Heart right ventricle (tissue), 16 donors: ENCODE measurements at regions of chr4 and their contacts with region 1.

Region 1: GRCh38 chr4:88613417-88613875 is 21.2 kb downstream of the HERC3 start:
- DNase-seq: no peak
- ATAC-seq: peak in 6 of 8 donors; percentile 23 to 61 (median 38)
- H3K4me3 ChIP-seq: peak overlapping the region in 2 of 10 donors; percentile 0 to 6
- H3K27ac ChIP-seq: peak overlapping the region; percentile 57 to 85 (median 72)
- H3K4me1 ChIP-seq: peaks cover 17 to 94% (median 68%) of the 10 kb centered on the region in 9 donors
- H3K27me3 ChIP-seq: no peaks in the 10 kb centered on the region
- CTCF ChIP-seq: no peak

Region 2: DNA sequence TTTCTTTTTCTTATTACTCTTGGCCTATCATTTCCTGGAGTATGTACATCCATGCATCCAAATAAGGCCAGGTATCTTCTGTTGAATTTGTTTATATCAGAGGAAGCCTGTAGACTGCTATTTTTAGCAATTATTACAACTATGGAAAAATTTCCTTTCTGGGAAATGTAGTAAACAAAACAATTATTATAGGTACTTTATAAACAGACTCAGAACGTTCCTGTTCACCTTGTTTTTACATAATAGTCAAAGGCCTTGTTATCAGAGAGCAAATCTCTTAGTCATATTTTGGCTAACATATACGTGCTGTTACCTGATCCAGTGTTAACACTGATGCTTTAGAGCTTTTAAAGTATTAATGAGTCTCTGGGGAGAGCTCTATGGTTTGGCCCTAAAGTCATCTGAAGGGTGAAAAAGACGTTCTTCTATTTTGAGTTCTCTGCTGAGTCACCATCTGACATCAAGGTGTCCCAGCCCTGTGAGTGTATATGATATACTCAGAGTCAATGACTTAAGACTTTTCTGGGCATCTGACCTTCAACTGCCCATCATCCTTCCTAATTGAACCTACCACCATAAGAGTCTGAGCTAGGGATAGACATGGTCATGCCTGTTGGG is 1091.6 kb before region 1 on chr4:
- intact Hi-C with region 1: loop called in 1 of 10 experiments (anchors 5 kb)
- DNase-seq: no peak
- ATAC-seq: peak in 7 of 8 donors; percentile 16 to 69 (median 41)
- H3K4me3 ChIP-seq: peak overlapping the region in 3 of 10 donors; percentile 4 to 28 (median 14)
- H3K27ac ChIP-seq: peak overlapping the region; percentile 69 to 93 (median 84)
- H3K4me1 ChIP-seq: peaks cover 11 to 94% (median 67%) of the 10 kb centered on the region in 9 donors
- H3K27me3 ChIP-seq: no peaks in the 10 kb centered on the region
- CTCF ChIP-seq: no peak

Region 3: GRCh38 chr4:88257726-88258125 is 355.7 kb before region 1 on chr4:
- intact Hi-C with region 1: no loop called
- DNase-seq: no peak
- ATAC-seq: no peak
- H3K4me3 ChIP-seq: no peak overlapping the region
- H3K27ac ChIP-seq: no peak overlapping the region
- H3K4me1 ChIP-seq: no peaks in the 10 kb centered on the region
- H3K27me3 ChIP-seq: no peaks in the 10 kb centered on the region
- CTCF ChIP-seq: no peak